ENCODE measurements at regions of chr18 and their contacts with region 1.

Region 1: DNA sequence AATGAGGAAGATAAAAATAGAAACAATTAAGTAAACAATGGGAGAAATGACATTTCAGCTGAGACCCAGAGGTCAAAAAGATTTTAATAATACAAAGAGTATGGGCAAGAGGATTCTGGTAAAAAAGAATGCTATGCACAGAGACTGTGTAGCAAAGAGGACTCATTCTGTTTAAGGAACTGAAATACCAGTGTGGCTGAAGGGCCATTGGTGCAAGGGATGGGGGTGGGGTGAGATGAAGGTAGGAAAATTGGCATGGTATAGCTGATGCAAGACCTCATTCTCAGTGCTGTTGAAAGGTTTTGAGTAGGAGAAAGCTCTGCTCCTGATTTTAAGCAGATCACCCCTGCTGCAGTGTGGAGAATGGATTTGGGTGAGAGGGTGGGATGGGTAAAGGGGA is 10.8 kb downstream of the GALNT1 start:
- DNase-seq: no peak
- ATAC-seq: no peak
- H3K4me3 ChIP-seq: no peak overlapping the region
- H3K27ac ChIP-seq: no peak overlapping the region
- H3K4me1 ChIP-seq: peaks cover 3% of the 10 kb centered on the region; the same call in 1 of the 2 replicates
- H3K27me3 ChIP-seq: no peaks in the 10 kb centered on the region
- CTCF ChIP-seq: no peak

Region 2: DNA sequence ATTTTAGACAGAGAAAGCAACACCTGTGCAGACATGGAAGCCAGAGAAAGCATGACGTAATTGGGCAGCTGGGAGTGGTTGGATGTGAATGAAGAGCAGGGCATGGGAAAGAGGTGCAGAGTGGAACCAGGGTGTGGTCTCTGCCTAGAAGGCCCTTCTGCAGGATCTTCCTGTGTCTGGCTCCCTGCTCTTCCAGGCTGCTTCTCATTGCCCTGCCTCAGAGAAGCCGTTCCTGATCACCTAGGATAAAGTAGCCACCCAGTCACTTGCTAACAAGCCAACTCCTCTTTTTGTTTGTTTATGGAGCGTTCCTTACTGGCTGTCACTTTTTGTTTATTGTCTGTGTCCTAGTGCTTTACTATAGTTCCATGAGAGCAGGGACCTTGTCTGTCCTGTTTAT is 17.8 kb after region 1 on chr18:
- CTCF ChIA-PET with region 1: no interaction called
- POLR2A ChIA-PET with region 1: no interaction called
- in situ Hi-C with region 1: no loop called
- intact Hi-C with region 1: no loop called
- DNase-seq: no peak
- ATAC-seq: peak; percentile 79
- H3K4me3 ChIP-seq: no peak overlapping the region
- H3K27ac ChIP-seq: peak overlapping the region; percentile 59; the same call in 1 of the 2 replicates
- H3K4me1 ChIP-seq: peaks cover 79% of the 10 kb centered on the region
- H3K27me3 ChIP-seq: no peaks in the 10 kb centered on the region
- CTCF ChIP-seq: no peak

Region 3: GRCh38 chr18:35642802-35643201 is 50.5 kb after region 1 on chr18:
- CTCF ChIA-PET with region 1: no interaction called
- POLR2A ChIA-PET with region 1: no interaction called
- in situ Hi-C with region 1: no loop called
- intact Hi-C with region 1: loop called (anchors 10 kb)
- DNase-seq: no peak
- ATAC-seq: peak; percentile 48; the same call in 1 of the 2 replicates
- H3K4me3 ChIP-seq: no peak overlapping the region
- H3K27ac ChIP-seq: no peak overlapping the region
- H3K4me1 ChIP-seq: no peaks in the 10 kb centered on the region; the same call in 1 of the 2 replicates
- H3K27me3 ChIP-seq: no peaks in the 10 kb centered on the region
- CTCF ChIP-seq: no peak

Region 4: DNA sequence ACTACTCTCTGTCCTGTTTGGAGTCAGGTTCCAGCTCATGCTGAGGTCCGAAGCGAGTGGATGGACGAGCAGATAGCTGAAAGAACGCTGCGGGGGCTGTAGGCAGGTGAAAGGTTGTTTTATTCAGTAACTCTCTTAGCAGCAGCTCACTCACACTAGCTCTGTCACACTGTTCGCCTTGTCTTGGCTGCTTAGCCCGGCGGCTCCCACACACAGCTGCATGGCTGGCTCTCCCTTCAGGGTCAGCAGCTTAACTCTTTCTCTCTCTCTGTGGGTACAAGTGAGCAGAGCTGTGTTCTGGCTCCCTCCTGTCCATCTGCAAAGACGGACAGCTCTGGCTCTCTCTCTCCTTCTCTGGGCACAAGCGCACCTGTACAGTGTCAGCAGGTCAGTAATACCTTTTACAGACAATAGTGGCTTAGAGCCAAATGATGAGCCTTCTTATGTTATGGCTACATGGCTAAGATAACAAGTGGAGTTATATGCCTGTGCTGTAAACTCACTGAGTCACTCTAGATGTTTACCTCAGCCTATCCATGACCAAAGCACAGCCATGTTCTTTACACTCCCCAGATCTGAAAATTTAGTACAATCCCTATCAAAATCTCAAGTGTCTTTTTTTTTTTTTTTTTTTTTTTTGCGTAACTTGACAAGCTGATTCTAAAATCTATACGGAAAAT is 138.5 kb after region 1 on chr18:
- CTCF ChIA-PET with region 1: no interaction called
- POLR2A ChIA-PET with region 1: no interaction called
- in situ Hi-C with region 1: no loop called
- intact Hi-C with region 1: no loop called
- DNase-seq: no peak
- ATAC-seq: peak; percentile 84
- H3K4me3 ChIP-seq: peak overlapping the region; percentile 24 to 46
- H3K27ac ChIP-seq: 0 out of 2 replicates have a peak overlapping the region, but pooled peaks have one; percentile 8
- H3K4me1 ChIP-seq: no peaks in the 10 kb centered on the region
- H3K27me3 ChIP-seq: no peaks in the 10 kb centered on the region
- CTCF ChIP-seq: no peak

Region 5: GRCh38 chr18:35756506-35757117 is 164.3 kb after region 1 on chr18:
- CTCF ChIA-PET with region 1: no interaction called
- POLR2A ChIA-PET with region 1: no interaction called
- in situ Hi-C with region 1: no loop called
- intact Hi-C with region 1: no loop called
- DNase-seq: peak; percentile 12
- ATAC-seq: peak; percentile 93
- H3K4me3 ChIP-seq: no peak overlapping the region
- H3K27ac ChIP-seq: no peak overlapping the region
- H3K4me1 ChIP-seq: no peaks in the 10 kb centered on the region; the same call in 1 of the 2 replicates
- H3K27me3 ChIP-seq: no peaks in the 10 kb centered on the region
- CTCF ChIP-seq: peak; percentile 74

Region 6: DNA sequence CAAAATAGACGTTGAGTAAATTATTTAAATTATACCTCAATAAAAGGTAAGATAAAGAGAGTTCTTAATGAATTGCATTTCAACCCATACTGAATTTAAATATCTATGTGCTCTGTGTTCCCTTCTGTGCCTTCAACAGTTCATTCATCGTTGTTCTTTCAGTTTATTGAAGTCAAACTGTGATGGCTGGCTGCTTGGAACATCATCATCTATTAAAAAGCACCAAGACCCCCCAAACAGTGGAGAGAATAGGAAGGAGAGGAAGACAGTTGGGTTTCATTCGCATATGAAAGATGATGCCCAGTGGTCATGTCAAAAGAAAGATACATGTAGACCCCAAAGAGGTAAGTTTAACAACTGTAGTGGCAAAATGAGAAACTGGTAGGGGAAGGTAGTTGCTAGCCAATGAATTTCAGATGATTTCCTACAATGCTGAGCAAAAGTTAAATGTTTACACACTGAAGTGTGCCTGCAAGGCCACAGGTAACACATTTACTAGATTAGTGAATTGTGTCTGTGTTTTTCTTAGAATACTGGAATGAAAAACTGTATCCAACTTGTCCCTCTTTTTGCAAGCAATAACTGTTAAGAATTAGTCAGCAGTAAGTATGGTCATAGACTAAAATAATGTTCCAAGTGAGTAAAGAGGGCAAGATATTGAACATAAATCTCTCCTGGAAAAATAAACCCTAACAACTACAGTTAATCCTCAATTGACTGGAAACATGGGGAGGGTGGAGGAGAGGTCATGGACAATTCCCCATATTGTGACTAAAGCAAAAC is 1567.9 kb after region 1 on chr18:
- CTCF ChIA-PET with region 1: no interaction called
- POLR2A ChIA-PET with region 1: no interaction called
- in situ Hi-C with region 1: no loop called
- intact Hi-C with region 1: no loop called
- DNase-seq: no peak
- ATAC-seq: no peak
- H3K4me3 ChIP-seq: no peak overlapping the region
- H3K27ac ChIP-seq: no peak overlapping the region
- H3K4me1 ChIP-seq: no peaks in the 10 kb centered on the region
- H3K27me3 ChIP-seq: no peaks in the 10 kb centered on the region
- CTCF ChIP-seq: no peak